ENCODE measurements at regions of chr7 and their contacts with region 1.

Region 1: DNA sequence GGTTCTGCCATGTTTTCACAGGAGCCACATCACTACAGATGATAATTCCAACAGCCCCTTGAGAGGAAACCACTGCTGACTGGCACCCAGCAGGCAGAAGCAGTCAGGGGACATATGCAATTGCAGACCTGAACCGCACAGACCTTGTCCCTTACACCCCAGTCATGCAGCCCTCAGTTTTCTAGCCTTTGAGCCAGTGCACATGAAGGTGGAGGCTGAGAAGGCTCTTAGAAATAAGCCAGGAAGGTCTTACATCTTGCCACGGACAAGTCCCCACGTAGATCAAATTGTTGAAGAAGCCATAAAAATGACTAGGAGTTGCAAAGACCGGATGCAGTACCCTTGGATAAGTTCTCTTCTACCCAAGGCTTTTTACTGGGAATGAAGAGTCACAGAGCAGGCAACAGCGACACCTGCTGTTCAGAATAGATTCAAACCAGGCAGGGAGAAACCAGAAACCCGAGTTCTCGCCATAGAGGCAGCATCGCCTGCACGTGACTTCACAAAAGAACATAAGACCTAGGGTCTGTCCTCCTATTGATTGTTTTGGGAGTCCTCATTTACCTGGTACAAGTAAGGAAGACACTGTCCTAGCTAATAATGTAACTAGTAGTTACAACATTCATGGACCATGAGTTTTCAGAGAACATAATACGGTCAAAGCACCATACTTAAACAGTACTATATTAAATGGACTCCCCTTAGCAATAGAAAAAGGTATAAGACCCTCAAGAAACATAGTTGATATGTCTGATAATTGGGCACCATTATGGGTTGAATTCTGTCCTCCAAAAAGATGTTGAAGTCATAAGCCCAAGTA is 11.1 kb downstream of the STEAP1B start:
- DNase-seq: peak in 1 of 2 donors; percentile 79
- H3K4me3 ChIP-seq: no peak overlapping the region
- H3K27ac ChIP-seq: no peak overlapping the region
- H3K4me1 ChIP-seq: no peaks in the 10 kb centered on the region
- H3K27me3 ChIP-seq: no peaks in the 10 kb centered on the region
- CTCF ChIP-seq: peak; percentile 68 to 88 (median 81)

Region 2: GRCh38 chr7:22103255-22103969 is 385.4 kb before region 1 on chr7:
- intact Hi-C with region 1: loop called (anchors 1 kb)
- DNase-seq: peak in 1 of 2 donors; percentile 77
- H3K4me3 ChIP-seq: no peak overlapping the region
- H3K27ac ChIP-seq: no peak overlapping the region
- H3K4me1 ChIP-seq: no peaks in the 10 kb centered on the region
- H3K27me3 ChIP-seq: no peaks in the 10 kb centered on the region
- CTCF ChIP-seq: peak; percentile 37 to 71 (median 50)

Measured in ascending aorta (tissue), 2 donors.